Esophagus muscularis mucosa (tissue), 4 donors: ENCODE measurements at regions of chr13 and their contacts with region 1.

Region 1: GRCh38 chr13:42969558-42970172 is 22.4 kb downstream of the EPSTI1 start:
- DNase-seq: peak; percentile 42
- H3K4me3 ChIP-seq: no peak overlapping the region
- H3K27ac ChIP-seq: no peak overlapping the region
- H3K4me1 ChIP-seq: peaks cover 8 to 19% (median 14%) of the 10 kb centered on the region in 4 donors
- H3K27me3 ChIP-seq: no peaks in the 10 kb centered on the region
- CTCF ChIP-seq: peak; percentile 78 to 87 (median 83)
- EP300 ChIP-seq: no peak
- POLR2A ChIP-seq: no peak

Region 2: GRCh38 chr13:43023289-43023951 is 53.8 kb after region 1 on chr13 and contains the start of gene DNAJC15:
- intact Hi-C with region 1: loop called (anchors 2 kb)
- DNase-seq: peak; percentile 94
- H3K4me3 ChIP-seq: peak within 1 kb of the TSS; percentile 61 to 80 (median 68)
- H3K27ac ChIP-seq: peak within 1 kb of the TSS; percentile 78 to 85 (median 84)
- H3K4me1 ChIP-seq: peaks cover 13 to 42% (median 37%) of the 10 kb centered on the region in 4 donors
- H3K27me3 ChIP-seq: peaks cover 0 to 4% (median 0%) of the 10 kb centered on the region in 4 donors
- CTCF ChIP-seq: peak in 1 of 3 experiments; percentile 3
- EP300 ChIP-seq: peak; percentile 35
- POLR2A ChIP-seq: no peak
- total RNA-seq, gene DNAJC15: 13.3 to 19.8 (median 13.6) TPM

Region 3: DNA sequence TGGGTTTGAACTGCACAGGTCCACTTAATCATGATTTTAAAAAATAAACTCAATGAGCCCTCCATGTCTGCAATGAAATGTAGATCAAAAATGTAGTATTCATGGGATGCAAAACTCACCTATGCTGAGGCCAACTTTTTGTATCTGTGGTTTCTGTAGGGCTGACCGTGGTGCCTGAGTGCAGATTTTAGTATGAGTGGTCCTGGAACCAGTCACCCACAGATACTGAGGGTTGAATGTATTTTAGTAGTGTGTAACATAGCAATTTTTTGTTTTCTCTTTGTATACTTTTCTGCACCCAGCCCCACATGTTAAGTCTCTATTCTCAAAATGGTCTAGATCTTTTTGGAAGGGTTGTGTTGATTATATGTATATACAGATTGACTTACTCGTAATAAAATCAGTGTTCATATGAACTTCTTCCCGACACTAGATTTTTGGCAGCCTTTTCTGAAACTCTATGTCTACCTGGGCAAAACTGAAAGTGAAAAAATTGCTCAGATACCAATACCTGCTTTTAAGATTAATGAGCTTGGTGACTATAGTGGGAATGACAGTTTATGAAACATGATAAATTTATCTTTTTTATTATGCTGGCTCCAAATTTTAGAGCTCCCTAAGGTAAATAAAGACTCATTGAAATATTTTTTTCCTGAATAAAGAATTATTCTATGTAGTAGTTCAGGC is 105.3 kb after region 1 on chr13:
- intact Hi-C with region 1: loop called (anchors 10 kb)
- DNase-seq: no peak
- H3K4me3 ChIP-seq: no peak overlapping the region
- H3K27ac ChIP-seq: no peak overlapping the region
- H3K4me1 ChIP-seq: peaks cover 8 to 36% (median 20%) of the 10 kb centered on the region in 4 donors
- H3K27me3 ChIP-seq: no peaks in the 10 kb centered on the region
- CTCF ChIP-seq: no peak
- EP300 ChIP-seq: no peak
- POLR2A ChIP-seq: no peak

Region 4: DNA sequence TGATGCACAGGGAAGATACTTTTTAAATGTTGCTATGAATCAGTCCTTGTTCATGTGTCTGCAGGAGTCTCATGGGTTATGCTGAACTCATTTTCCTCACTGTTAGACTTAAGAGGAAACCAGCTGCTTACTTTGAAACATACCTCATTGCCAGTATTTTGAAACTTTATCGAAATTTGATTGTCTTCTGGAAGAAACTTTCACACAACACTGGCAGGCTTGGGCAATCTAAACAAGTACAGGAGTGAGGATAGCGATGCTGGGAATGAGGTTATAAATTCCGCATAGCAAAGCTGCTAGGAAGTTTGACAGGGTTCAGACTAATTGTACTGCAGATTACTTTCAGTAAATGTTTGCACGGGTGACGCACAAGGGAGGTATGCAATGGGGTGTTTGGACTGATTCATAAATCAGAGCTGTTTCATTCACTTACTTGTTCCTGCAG is 299.4 kb after region 1 on chr13:
- intact Hi-C with region 1: no loop called
- DNase-seq: peak; percentile 93
- H3K4me3 ChIP-seq: no peak overlapping the region
- H3K27ac ChIP-seq: peak overlapping the region; percentile 66 to 79 (median 75)
- H3K4me1 ChIP-seq: peaks cover 23 to 32% (median 29%) of the 10 kb centered on the region in 4 donors
- H3K27me3 ChIP-seq: no peaks in the 10 kb centered on the region
- CTCF ChIP-seq: no peak
- EP300 ChIP-seq: peak; percentile 98
- POLR2A ChIP-seq: no peak

Region 5: GRCh38 chr13:43804461-43805070 is 834.9 kb after region 1 on chr13:
- intact Hi-C with region 1: loop called (anchors 5 kb)
- DNase-seq: no peak
- H3K4me3 ChIP-seq: peak overlapping the region in 2 of 4 donors; percentile 10 to 21
- H3K27ac ChIP-seq: peak overlapping the region; percentile 34 to 71 (median 38)
- H3K4me1 ChIP-seq: peaks cover 0 to 11% (median 8%) of the 10 kb centered on the region in 4 donors
- H3K27me3 ChIP-seq: no peaks in the 10 kb centered on the region
- CTCF ChIP-seq: peak; percentile 61 to 72 (median 63)
- EP300 ChIP-seq: no peak
- POLR2A ChIP-seq: no peak

Region 6: GRCh38 chr13:43878892-43879754 is 909.5 kb after region 1 on chr13 and contains the start of gene CCDC122:
- intact Hi-C with region 1: loop called (anchors 5 kb)
- DNase-seq: peak; percentile 92
- H3K4me3 ChIP-seq: peak within 1 kb of the TSS; percentile 77 to 93 (median 86)
- H3K27ac ChIP-seq: peak within 1 kb of the TSS; percentile 95 to 99 (median 97)
- H3K4me1 ChIP-seq: peaks cover 12 to 25% (median 22%) of the 10 kb centered on the region in 4 donors
- H3K27me3 ChIP-seq: no peaks in the 10 kb centered on the region
- CTCF ChIP-seq: peak in 1 of 3 experiments; percentile 6
- EP300 ChIP-seq: no peak
- POLR2A ChIP-seq: no peak
- total RNA-seq, gene CCDC122: 2.1 to 13.2 (median 3.2) TPM